Head of caudate nucleus (tissue), 42 donors: ENCODE measurements at regions of chr13 and their contacts with region 1.

Region 1: DNA sequence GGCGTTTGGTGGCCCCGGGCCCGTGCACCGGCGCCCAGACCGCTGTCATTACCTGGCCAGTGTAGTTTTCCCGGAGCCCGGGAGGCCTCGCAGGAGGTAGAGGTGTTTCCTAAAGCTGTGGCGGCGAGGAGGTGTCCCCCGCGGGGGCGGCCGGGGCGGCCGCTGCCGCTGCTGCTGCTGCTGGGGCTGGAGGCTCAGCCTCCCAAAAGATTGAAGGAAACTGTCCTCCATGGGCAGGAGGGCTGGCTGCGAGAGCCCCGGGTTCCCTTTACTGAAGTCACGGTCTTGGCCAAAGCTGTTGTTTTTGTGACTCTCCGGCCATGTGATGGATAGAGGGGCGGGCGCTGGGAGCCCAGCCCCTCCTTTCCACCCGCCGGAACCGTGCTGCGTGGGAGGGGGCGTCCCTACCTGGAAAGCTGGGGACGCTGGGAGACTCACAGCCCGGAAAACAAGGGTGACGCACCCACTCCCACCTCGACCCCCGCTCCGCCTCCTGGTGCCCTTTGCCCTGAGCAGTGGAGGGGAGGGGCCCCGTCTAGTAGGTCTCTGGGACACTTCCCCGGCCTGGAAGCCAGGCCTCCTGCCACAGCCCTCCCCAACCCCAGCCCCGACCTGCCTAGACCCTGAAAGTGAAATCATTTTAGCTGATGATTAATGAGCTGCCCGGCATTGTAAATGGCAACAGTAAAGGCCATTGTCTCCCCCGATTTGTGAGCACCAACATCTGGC is at the start of gene N4BP2L1:
- DNase-seq: peak; percentile 69 to 91 (median 84)

Region 2: GRCh38 chr13:32315238-32316027 is 112.6 kb before region 1 on chr13 and contains the starts of genes BRCA2 and ZAR1L:
- intact Hi-C with region 1: loop called (anchors 10 kb)
- DNase-seq: peak; percentile 85 to 97 (median 93)

Region 3: GRCh38 chr13:32538621-32539246 is 110.7 kb after region 1 on chr13 and contains the start of gene N4BP2L2:
- intact Hi-C with region 1: loop called (anchors 10 kb)
- DNase-seq: peak; percentile 91 to 98 (median 96)

Region 4: GRCh38 chr13:32863596-32863995 is 435.6 kb after region 1 on chr13:
- intact Hi-C with region 1: no loop called
- DNase-seq: no peak